ENCODE measurements at regions of chr17 and their contacts with region 1.

Region 1: DNA sequence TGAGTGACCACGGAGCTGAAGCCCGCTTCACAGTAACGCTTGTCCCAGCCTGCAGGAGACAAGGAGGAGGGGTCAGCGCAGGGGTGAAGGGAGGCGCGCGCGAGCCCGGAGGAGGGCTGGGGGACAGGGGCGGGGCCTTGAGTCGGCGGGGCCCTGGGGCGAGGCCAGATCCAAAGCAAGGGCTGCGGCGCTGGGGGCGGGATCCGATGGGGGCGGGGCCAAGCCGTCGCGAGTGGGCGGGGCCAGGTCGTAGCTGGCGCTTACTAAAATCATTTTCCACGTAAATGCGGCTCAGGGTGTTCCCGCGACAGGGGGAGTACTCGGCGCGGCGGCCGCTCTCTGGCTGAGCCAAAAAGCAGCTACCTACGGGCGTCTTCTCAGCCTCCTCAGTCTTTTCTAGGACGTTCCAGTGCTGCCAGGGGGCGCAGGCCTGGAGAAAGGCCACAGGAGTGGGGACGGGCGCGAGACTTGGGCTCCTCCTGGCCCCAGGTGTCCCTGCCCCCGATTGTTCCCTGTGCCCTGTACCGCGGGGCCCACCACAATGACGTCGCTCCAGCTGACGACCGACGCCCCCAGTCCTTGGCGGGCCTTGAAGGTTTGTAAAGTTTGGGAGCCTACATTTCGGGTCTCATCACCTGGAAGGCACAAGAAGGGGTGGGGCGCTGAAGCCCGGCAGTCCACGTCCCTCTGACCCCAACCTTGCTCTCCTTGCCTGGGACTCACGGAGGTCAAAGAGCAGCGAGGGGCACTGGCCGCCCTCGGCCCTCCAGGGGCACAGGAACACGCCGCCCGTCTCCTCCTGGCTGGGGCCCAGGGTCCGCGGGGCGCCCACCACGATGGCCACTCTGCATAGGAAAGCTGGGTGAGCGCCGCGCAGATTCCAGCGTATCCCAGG is 3.9 kb downstream of the ITGA2B start:
- DNase-seq: peak; percentile 95
- H3K4me3 Mint-ChIP-seq: peak overlapping the region; percentile 76
- H3K27ac Mint-ChIP-seq: peak overlapping the region; percentile 38
- H3K4me1 Mint-ChIP-seq: peaks cover 13% of the 10 kb centered on the region
- H3K27me3 Mint-ChIP-seq: peaks cover 21% of the 10 kb centered on the region

Region 2: DNA sequence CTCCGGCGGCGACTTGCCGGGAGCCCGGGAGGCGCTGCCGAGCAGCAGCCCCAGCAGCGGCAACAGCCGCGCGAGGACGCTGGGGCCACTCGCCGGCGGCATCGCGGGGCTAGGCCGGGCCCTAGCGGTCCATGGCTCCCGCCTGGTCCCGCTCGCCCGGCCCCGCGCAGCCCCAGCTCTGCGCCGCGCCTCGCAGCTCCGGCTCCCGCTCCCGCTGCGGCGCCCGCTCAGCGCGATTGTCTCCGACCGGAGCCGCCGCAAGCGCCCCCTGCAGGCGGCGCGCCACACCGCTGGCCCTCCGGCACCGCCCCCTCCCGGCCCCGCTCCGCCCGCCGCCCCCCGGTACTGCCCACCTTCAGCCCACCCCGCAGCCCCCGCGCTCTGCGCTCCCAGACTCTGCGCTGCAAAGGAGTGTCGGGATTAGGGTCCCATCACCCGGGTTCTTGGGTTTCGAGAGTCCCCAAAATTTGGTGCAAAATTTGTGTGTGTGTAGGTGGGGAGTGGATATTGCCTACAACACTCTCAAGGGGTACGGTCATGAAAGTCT is 21.8 kb before region 1 on chr17 and contains the start of gene FAM171A2:
- intact Hi-C with region 1: loop called (anchors 1 kb)
- DNase-seq: peak; percentile 92
- H3K4me3 Mint-ChIP-seq: peak within 1 kb of the TSS; percentile 80
- H3K27ac Mint-ChIP-seq: no peak within 1 kb of the TSS
- H3K4me1 Mint-ChIP-seq: no peaks in the 10 kb centered on the region
- H3K27me3 Mint-ChIP-seq: peaks cover 50% of the 10 kb centered on the region
- total RNA-seq, gene FAM171A2: 0.21 and 0.26 TPM in 2 replicates

Measured in activated CD4-positive, alpha-beta T cell treated with anti-CD3 and anti-CD28 coated beads, Interleukin-2, amount 10 ng/mL, durations not matched to agents 24 days and 14 days (primary cell).